ENCODE measurements at regions of chr1 and their contacts with region 1.

Region 1: GRCh38 chr1:67840449-67840848 is 7.2 kb upstream of the GNG12 start:
- DNase-seq: no peak
- H3K4me3 ChIP-seq: no peak overlapping the region
- H3K27ac ChIP-seq: no peak overlapping the region
- H3K27me3 ChIP-seq: no peaks in the 10 kb centered on the region
- CTCF ChIP-seq: no peak

Region 2: DNA sequence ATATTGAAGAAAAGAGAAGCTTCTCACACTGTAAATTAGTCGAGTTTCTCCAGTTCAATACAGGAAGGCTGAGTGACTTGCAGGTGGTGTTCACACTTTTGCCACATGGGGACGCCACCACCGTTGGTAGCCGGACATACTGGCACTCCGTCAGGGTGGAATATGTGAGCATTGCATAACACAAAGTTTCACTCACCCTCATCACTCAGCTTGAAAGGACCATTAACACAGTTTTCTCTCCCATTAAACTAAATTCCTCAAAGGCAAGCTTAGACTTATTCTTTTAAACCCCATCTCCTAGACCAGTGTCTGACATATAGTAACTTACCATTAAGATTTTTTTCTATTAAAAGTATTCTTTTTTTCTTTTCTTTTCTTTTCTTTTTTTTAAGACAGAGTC is 305.0 kb before region 1 on chr1:
- intact Hi-C with region 1: loop called in 1 of 2 experiments (anchors 10 kb)
- DNase-seq: peak; percentile 13 to 75 (median 60)
- H3K4me3 ChIP-seq: no peak overlapping the region
- H3K27ac ChIP-seq: no peak overlapping the region
- H3K27me3 ChIP-seq: no peaks in the 10 kb centered on the region
- CTCF ChIP-seq: peak; percentile 60 to 90 (median 76)

Region 3: DNA sequence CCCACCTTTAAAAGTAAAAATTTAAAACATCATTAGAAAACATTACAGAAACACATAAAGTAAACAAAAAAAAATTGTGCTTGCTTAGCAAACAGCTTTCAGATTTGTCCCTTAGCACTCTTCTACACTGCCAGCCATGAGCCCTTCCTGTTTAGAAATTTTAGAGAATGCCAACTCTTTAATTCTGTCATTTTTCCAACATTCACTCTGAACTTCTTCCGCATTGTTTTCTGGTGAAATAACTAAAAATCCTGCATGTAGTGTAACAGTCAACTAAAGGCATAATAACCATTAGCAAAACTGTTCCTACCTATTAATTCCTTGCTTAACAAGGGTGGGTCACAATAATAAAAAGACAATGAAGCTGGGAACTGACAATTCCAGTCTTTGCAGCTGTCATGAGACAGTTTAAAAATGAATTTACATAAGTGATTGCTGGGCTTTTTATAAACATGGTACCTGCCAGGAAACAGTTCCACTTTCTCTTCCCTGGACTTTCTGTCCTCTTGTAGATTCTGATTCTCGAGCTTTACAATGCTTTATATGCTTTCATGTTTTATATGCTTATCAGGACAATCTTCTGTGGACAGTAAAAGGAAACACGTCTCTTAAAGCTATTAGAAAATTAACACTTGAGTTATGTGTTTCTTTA is 26.2 kb before region 1 on chr1:
- intact Hi-C with region 1: no loop called
- DNase-seq: no peak
- H3K4me3 ChIP-seq: no peak overlapping the region
- H3K27ac ChIP-seq: peak overlapping the region in 9 of 59 donors; percentile 0 to 46 (median 18)
- H3K27me3 ChIP-seq: no peaks in the 10 kb centered on the region
- CTCF ChIP-seq: no peak

Measured in dorsolateral prefrontal cortex (tissue), 120 donors.